ENCODE measurements at regions of chr6 and their contacts with region 1.

Region 1: DNA sequence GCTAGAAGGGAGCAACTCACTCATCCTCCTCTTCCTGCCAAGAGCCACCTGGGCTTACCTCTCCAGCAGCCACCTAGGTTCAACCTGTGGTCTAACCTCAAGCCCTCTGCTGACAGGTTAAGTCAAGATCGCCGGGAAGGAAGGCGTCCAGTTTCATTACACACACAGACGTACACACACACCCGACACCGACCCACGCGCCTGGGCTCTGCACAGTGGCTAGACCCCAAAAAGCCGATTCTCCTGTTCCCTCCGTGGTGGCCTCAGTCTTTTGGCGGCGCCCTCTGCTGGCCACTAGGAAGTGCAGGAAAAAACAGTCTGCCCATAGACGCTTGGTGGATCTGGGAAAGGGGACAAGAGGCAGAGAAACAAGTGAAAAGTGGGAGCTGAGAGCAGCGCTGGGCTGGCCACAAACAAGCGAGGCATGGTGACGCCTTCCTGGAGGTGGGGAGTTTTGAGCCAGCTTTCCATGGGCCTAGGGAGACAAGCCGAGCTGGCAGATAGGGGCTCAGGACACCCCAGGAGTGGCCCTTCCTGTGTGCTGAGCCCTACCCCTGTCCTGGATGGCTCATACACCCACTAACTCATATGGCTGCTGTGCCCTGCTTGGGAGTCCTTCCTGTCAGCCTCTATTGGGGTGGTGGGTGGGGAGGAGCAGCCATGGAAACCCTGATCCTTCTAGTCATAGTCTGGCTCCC is 52.7 kb downstream of the MRPL14 start:
- DNase-seq: peak; percentile 83
- H3K4me3 ChIP-seq: no peak overlapping the region
- H3K27ac ChIP-seq: peak overlapping the region; percentile 27
- H3K4me1 ChIP-seq: peaks cover 61% of the 10 kb centered on the region
- H3K27me3 ChIP-seq: no peaks in the 10 kb centered on the region
- CTCF ChIP-seq: peak; percentile 92

Region 2: GRCh38 chr6:43608310-43608763 is 466.3 kb before region 1 on chr6:
- CTCF ChIA-PET with region 1: no interaction called
- dilution Hi-C with region 1: no loop called
- in situ Hi-C with region 1: no loop called
- intact Hi-C with region 1: loop called (anchors 1 kb)
- DNase-seq: peak; percentile 45
- H3K4me3 ChIP-seq: no peak overlapping the region
- H3K27ac ChIP-seq: no peak overlapping the region
- H3K4me1 ChIP-seq: peaks cover 11% of the 10 kb centered on the region
- H3K27me3 ChIP-seq: no peaks in the 10 kb centered on the region
- CTCF ChIP-seq: peak; percentile 74 to 84

Region 3: GRCh38 chr6:43723737-43724295 is 350.8 kb before region 1 on chr6:
- CTCF ChIA-PET with region 1: interaction called, 5 read pairs
- dilution Hi-C with region 1: no loop called
- in situ Hi-C with region 1: loop called in 1 of 2 experiments (anchors 5 kb)
- intact Hi-C with region 1: loop called (anchors 1 kb)
- DNase-seq: peak; percentile 76
- H3K4me3 ChIP-seq: no peak overlapping the region
- H3K27ac ChIP-seq: no peak overlapping the region
- H3K4me1 ChIP-seq: peaks cover 31% of the 10 kb centered on the region
- H3K27me3 ChIP-seq: no peaks in the 10 kb centered on the region
- CTCF ChIP-seq: peak; percentile 75 to 84

Region 4: DNA sequence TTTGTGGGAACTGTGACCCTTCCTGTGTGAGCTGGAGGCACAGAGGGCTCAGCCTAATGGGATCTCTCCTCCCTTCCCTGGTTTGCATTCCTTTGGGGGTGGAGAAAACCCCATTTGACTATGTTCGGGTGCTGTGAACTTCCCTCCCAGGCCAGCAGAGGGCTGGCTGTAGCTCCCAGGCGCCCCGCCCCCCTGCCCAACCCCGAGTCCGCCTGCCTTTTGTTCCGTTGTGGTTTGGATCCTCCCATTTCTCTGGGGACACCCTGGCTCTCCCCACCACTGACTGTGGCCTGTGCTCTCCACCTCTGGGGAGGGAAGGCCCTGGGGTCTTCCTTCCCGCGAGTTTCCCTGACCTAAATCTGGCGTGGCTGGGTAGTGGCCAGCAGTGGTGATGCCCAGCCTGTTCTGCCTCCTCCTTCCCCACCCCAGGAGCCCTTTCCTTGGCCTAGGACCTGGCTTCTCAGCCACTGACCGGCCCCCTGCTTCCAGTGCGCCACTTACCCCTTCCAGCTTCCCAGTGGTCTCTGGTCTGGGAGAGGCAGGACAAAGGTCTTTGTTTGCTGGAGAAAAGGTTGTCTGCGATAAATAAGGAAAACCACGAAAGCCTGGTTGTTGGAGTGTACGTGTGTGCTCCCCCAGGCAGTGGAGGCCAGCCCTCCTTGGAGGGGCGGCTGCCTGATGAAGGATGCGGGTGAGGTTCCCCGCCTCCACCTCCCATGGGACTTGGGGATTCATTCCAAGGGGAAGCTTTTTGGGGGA is 299.6 kb before region 1 on chr6:
- CTCF ChIA-PET with region 1: interaction called, 6 read pairs
- dilution Hi-C with region 1: no loop called
- in situ Hi-C with region 1: no loop called
- intact Hi-C with region 1: loop called (anchors 1 kb)
- DNase-seq: peak; percentile 69
- H3K4me3 ChIP-seq: peak overlapping the region; percentile 97 to 98 (median 98)
- H3K27ac ChIP-seq: peak overlapping the region; percentile 14
- H3K4me1 ChIP-seq: peaks cover 22% of the 10 kb centered on the region
- H3K27me3 ChIP-seq: no peaks in the 10 kb centered on the region
- CTCF ChIP-seq: peak; percentile 83 to 94

Region 5: DNA sequence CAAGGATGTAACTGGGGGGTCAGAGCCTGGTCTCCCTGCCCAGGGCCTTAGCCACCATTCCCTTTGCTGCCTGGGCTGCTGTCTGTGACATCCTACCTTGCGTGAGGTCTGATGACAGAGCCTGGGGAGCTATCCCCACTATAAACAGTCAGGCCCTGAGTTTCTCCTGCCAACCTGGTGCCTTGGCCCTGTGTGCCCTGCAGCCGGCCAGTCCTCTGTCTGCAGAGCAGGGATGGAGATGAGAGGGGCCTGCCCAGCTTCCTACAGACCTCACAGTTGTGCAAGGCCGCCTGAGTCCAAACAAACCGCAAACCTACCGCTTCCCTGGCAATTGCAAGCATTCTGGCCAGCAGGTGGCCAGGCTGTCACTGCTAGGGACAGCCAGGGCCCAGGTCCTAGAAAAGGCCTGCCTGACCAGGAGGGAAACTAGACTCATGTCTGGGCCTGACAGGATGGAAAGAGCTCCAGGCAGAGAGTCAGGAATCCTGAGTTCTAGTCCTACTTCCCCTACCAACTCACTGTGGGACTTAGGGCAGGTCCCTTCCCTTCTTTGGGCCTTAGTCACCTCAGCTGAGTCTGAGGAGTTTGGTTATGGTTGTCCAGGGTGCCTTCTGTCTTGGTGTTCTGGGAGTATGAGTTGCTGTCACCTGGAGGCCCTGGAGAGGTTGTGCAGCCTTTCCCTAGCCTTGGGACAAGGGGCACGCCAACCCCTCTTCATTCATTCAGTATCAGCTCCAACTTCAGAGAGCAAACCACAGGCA is 218.4 kb before region 1 on chr6:
- CTCF ChIA-PET with region 1: no interaction called
- dilution Hi-C with region 1: no loop called
- in situ Hi-C with region 1: no loop called
- intact Hi-C with region 1: loop called (anchors 2 kb)
- DNase-seq: peak; percentile 45
- H3K4me3 ChIP-seq: no peak overlapping the region
- H3K27ac ChIP-seq: no peak overlapping the region
- H3K4me1 ChIP-seq: peaks cover 7% of the 10 kb centered on the region
- H3K27me3 ChIP-seq: no peaks in the 10 kb centered on the region
- CTCF ChIP-seq: peak; percentile 36 to 61

Region 6: GRCh38 chr6:43990627-43991619 is 83.7 kb before region 1 on chr6:
- CTCF ChIA-PET with region 1: no interaction called
- dilution Hi-C with region 1: no loop called
- in situ Hi-C with region 1: no loop called
- intact Hi-C with region 1: no loop called
- DNase-seq: no peak
- H3K4me3 ChIP-seq: no peak overlapping the region
- H3K27ac ChIP-seq: no peak overlapping the region
- H3K4me1 ChIP-seq: peaks cover 12% of the 10 kb centered on the region
- H3K27me3 ChIP-seq: no peaks in the 10 kb centered on the region
- CTCF ChIP-seq: no peak

Region 7: GRCh38 chr6:44004625-44005506 is 69.7 kb before region 1 on chr6:
- CTCF ChIA-PET with region 1: no interaction called
- dilution Hi-C with region 1: no loop called
- in situ Hi-C with region 1: no loop called
- intact Hi-C with region 1: loop called (anchors 2 kb)
- DNase-seq: no peak
- H3K4me3 ChIP-seq: no peak overlapping the region
- H3K27ac ChIP-seq: no peak overlapping the region
- H3K4me1 ChIP-seq: peaks cover 15% of the 10 kb centered on the region
- H3K27me3 ChIP-seq: no peaks in the 10 kb centered on the region
- CTCF ChIP-seq: peak; percentile 11 to 55

Region 8: DNA sequence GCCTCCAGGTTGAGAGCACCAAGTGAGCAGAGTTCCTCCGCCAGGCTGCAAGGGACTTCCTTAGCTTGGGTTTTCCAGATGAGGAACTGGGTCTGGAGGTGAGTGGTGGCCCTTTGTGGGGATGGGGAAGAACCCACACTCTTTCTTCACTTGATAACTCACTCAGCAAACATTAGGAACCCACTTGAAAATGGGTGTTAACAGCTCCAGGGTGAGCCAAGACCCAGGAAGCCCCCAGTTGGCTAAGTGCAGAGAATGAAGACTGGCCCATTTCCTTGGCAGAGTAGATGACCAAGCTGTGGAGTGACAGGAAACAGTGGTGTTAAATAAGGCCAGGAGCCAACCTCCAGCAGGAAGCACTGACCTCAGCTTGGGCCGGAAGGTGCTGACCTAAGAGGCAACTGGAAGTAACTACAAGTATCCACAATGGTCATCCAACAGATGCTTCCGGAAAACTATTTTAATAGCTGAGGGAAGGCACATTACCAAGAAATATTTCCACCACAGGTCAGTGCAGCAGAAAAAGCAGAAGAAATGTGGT is 30.0 kb after region 1 on chr6:
- CTCF ChIA-PET with region 1: no interaction called
- dilution Hi-C with region 1: no loop called
- in situ Hi-C with region 1: no loop called
- intact Hi-C with region 1: no loop called
- DNase-seq: no peak
- H3K4me3 ChIP-seq: no peak overlapping the region
- H3K27ac ChIP-seq: no peak overlapping the region
- H3K4me1 ChIP-seq: no peaks in the 10 kb centered on the region
- H3K27me3 ChIP-seq: no peaks in the 10 kb centered on the region
- CTCF ChIP-seq: no peak

Region 9: DNA sequence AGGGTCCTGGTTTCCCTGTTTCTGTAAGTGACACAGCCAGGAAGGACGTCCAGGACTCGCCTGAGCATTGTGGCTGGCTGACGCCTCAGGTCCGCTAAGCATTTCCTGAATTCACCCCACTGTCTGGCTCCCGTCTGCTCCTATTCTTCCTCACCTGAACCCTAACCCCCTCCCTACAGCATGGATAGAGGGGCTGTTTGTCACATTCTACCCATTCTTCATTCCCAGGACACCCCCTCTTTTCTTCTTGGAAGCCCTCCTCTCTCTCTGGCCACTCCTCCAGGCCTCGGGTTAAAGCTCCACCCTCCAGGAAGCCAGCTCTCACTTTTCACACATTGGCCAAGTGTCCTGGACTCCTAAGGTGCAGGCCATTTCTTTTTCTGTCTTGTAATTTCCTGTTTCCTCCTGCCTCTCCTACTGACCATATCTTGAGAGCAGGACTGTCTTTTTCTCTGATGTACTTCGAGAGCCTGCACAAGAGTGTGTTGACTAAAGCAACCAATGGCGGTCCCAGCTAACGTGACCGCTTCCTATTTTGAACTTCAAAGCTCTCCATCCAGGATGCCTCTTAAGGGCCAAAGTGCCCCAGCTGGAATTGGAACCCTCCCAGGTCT is 117.9 kb after region 1 on chr6:
- CTCF ChIA-PET with region 1: no interaction called
- dilution Hi-C with region 1: no loop called
- in situ Hi-C with region 1: no loop called
- intact Hi-C with region 1: no loop called
- DNase-seq: no peak
- H3K4me3 ChIP-seq: no peak overlapping the region
- H3K27ac ChIP-seq: no peak overlapping the region
- H3K4me1 ChIP-seq: no peaks in the 10 kb centered on the region
- H3K27me3 ChIP-seq: no peaks in the 10 kb centered on the region
- CTCF ChIP-seq: no peak